CD4-positive, alpha-beta T cell (primary cell): ENCODE measurements at regions of chr10 and their contacts with region 1.

Region 1: DNA sequence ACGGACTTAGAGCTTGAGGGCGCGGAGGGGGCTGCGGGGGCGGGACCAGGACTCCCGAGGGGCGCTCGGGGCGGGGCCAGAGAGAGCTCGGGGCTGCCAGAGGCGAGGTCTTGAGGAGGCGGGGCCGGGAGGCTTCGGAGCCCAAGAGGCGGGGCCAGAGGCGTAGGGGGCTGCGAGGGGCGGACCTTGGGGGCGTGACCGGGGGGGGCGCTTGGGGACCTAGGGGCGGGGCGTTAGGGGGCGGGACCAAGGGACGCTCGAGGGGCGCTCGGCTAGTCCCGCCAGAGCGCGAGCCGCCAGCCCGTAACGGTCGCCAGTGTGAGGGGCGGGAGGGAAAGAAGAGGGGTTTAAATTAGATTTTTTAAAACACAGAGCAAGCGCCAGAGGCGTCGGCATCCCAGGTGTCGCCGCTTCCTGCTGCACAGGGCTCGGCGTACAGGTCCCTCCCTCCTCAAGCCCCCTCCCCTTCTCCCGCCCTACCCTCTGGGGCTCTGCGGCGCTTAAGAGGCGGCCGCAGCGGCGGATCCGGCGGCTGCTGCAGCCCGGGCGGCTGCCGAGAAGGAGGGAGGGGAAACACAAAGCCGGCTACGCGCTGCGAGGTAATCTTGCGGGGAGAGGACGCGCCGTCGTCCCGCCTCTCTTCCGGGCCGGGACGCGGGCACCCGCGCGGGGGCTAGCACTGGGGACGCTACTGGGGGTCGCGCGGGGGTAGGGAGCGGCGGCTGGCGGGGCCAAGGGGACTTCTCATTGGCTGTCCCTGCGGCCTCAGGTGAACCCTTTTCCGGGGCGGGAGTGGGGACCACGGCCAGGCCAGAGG is at the start of gene ADD3:
- DNase-seq: peak; percentile 83 to 97 (median 90)
- ATAC-seq: peak; percentile 72
- H3K4me3 ChIP-seq: peak within 1 kb of the TSS; percentile 63
- H3K4me3 Mint-ChIP-seq: peak within 1 kb of the TSS; percentile 99
- H3K27ac ChIP-seq: peak within 1 kb of the TSS; percentile 64 to 93
- H3K27ac Mint-ChIP-seq: no peak within 1 kb of the TSS
- H3K4me1 ChIP-seq: peaks cover 20% of the 10 kb centered on the region
- H3K4me1 Mint-ChIP-seq: peaks cover 50% of the 10 kb centered on the region
- H3K27me3 ChIP-seq: no peaks in the 10 kb centered on the region
- H3K27me3 Mint-ChIP-seq: no peaks in the 10 kb centered on the region
- CTCF ChIP-seq: no peak
- total RNA-seq, gene ADD3: 273 to 302 TPM

Region 2: DNA sequence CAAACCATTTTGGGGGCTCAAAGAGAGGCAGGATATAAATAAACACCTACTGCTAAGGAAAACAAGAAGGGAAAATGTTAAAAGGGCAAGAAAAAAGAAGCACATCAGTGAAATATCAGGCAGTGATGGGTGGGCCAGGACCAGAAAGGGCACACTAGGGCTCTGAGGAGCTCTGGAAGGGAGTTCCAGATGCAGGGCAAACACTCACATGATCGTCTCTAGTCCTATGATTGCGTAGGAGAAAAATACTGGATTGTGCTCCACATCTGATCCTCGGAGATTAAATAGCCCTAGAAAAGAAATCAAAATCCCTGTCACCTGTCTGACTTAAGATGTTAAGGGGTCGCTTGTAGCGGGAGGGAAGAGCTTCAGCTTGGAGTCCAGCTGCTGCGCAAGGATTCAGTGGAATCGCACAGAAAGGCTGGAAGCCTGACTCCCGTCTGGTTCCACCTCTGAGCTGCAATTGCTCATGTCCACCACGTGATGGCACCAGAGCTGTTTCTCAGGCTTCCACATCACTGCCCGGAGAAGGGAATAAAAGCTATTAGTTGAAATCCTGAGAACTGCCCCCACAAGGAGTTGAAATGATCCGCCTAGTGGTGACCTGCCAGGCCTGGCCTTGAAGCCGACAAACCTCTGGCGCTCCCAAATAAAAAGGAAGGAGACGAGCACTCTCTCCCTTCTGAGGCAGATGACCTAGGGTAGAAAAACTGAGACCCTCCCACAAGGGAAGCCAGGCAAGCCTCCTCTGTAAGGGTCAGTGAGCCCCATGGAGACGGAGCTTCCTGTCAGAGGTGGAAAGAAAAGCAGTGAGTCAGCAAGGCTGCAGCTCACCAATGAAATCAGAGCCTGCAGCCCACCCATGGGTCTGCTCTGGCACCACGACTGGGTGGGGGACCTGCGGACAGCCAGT is 123.8 kb before region 1 on chr10:
- CTCF ChIA-PET with region 1: interaction called, 5 read pairs
- POLR2A ChIA-PET with region 1: no interaction called
- intact Hi-C with region 1: loop called (anchors 2 kb)
- DNase-seq: peak; percentile 41 to 82 (median 52)
- ATAC-seq: peak; percentile 88
- H3K4me3 ChIP-seq: no peak overlapping the region
- H3K4me3 Mint-ChIP-seq: no peak overlapping the region
- H3K27ac ChIP-seq: no peak overlapping the region
- H3K27ac Mint-ChIP-seq: no peak overlapping the region
- H3K4me1 ChIP-seq: peaks cover 5% of the 10 kb centered on the region
- H3K4me1 Mint-ChIP-seq: peaks cover 6% of the 10 kb centered on the region
- H3K27me3 ChIP-seq: no peaks in the 10 kb centered on the region
- H3K27me3 Mint-ChIP-seq: no peaks in the 10 kb centered on the region
- CTCF ChIP-seq: peak; percentile 98

Region 3: DNA sequence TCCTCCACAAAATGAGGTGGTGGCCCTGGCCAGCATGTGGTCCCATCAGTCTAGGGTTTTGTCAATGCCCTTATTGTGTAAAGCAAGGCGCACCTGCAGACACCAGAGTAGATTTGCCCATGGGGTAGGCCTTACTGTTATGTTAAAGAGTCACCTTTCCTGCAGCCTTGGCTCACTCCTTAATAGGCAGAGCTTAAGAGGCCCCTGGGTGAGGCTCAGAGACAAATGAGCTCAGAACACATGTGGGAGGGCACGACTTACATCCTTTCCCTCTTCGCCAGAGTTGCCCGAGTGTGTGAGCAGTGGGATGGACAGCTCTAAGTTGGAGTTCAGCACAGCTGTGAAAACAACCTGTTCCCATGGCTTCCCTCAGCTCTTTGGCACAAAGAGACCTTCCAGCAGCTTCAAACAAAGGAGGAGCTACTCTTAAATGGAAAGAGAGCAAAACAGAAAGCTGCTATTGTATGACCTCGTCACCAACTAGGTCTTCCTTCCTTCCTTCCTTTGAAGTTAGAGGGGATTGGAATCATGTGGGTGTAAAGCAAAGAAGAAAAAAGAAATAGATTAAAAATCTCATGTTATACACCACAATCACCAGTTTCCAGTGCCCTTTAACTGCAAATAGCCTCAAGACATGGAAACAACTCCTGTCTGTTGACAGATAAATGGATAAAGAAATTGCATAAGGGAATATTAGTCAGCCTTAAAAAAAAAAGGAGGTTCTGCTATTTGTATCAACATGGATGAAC is 72.8 kb before region 1 on chr10:
- CTCF ChIA-PET with region 1: no interaction called
- POLR2A ChIA-PET with region 1: interaction called, 4 read pairs
- intact Hi-C with region 1: loop called in 1 of 2 experiments (anchors 2 kb)
- DNase-seq: peak in 4 of 14 experiments; percentile 26 to 73 (median 38)
- ATAC-seq: peak; percentile 54
- H3K4me3 ChIP-seq: peak overlapping the region; percentile 30
- H3K4me3 Mint-ChIP-seq: peak overlapping the region; percentile 82
- H3K27ac ChIP-seq: peak overlapping the region; percentile 21 to 68
- H3K27ac Mint-ChIP-seq: peak overlapping the region; percentile 90
- H3K4me1 ChIP-seq: peaks cover 57% of the 10 kb centered on the region
- H3K4me1 Mint-ChIP-seq: peaks cover 77% of the 10 kb centered on the region
- H3K27me3 ChIP-seq: no peaks in the 10 kb centered on the region
- H3K27me3 Mint-ChIP-seq: no peaks in the 10 kb centered on the region
- CTCF ChIP-seq: no peak

Region 4: DNA sequence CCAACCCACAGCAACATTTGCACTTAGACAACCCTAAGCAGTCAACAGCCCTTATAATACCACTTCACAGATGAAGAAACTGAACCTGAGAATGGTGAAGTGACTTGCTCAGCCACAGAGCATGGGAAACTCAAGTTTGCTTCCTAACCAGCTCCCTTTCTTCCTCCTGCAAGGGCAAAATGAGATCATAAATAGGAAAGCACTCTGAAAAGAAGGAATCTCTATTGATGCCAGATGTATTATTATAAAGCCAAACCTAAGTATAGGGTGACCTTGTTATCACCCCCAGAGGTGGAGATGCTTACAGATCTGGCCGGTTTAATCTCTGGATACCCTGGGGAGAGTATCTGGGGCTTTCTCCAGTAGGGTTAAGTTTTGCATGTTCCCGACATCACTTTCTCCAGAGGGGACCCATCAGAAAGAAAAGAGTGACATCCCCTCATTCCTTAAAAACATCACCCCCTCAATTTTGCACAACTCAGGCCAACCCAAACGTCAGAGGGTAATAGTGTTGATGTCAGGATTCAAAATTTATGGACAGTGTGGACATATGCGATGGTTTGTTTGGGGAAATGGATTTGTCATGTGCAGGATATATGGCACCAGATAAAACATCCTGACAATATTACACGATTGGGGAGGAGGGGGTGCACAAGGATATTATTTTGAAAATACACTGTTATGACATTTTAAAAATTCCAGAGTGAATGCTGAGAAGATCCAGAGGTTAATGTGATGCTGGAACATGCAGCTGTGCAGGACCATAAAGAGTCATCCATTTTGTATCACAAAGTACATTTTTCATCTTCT is 60.6 kb before region 1 on chr10:
- CTCF ChIA-PET with region 1: no interaction called
- POLR2A ChIA-PET with region 1: no interaction called
- intact Hi-C with region 1: no loop called
- DNase-seq: no peak
- ATAC-seq: no peak
- H3K4me3 ChIP-seq: no peak overlapping the region
- H3K4me3 Mint-ChIP-seq: no peak overlapping the region
- H3K27ac ChIP-seq: no peak overlapping the region
- H3K27ac Mint-ChIP-seq: no peak overlapping the region
- H3K4me1 ChIP-seq: no peaks in the 10 kb centered on the region
- H3K4me1 Mint-ChIP-seq: no peaks in the 10 kb centered on the region
- H3K27me3 ChIP-seq: no peaks in the 10 kb centered on the region
- H3K27me3 Mint-ChIP-seq: no peaks in the 10 kb centered on the region
- CTCF ChIP-seq: no peak

Region 5: GRCh38 chr10:110036640-110037039 is 28.7 kb after region 1 on chr10:
- CTCF ChIA-PET with region 1: no interaction called
- POLR2A ChIA-PET with region 1: interaction called, 6 read pairs
- intact Hi-C with region 1: loop called in 1 of 2 experiments (anchors 2 kb)
- DNase-seq: no peak
- ATAC-seq: no peak
- H3K4me3 ChIP-seq: no peak overlapping the region
- H3K4me3 Mint-ChIP-seq: peak overlapping the region; percentile 14
- H3K27ac ChIP-seq: no peak overlapping the region
- H3K27ac Mint-ChIP-seq: peak overlapping the region; percentile 56
- H3K4me1 ChIP-seq: peaks cover 45% of the 10 kb centered on the region
- H3K4me1 Mint-ChIP-seq: peaks cover 98% of the 10 kb centered on the region
- H3K27me3 ChIP-seq: no peaks in the 10 kb centered on the region
- H3K27me3 Mint-ChIP-seq: no peaks in the 10 kb centered on the region
- CTCF ChIP-seq: no peak

Region 6: GRCh38 chr10:110076559-110077318 is 68.8 kb after region 1 on chr10:
- CTCF ChIA-PET with region 1: interaction called, 9 read pairs
- POLR2A ChIA-PET with region 1: interaction called, 69 read pairs
- intact Hi-C with region 1: loop called (anchors 2 to 5 kb)
- DNase-seq: peak in 9 of 14 experiments; percentile 12 to 82 (median 29)
- ATAC-seq: peak; percentile 72
- H3K4me3 ChIP-seq: peak overlapping the region; percentile 54
- H3K4me3 Mint-ChIP-seq: peak overlapping the region; percentile 80
- H3K27ac ChIP-seq: peak overlapping the region; percentile 19 to 66
- H3K27ac Mint-ChIP-seq: peak overlapping the region; percentile 85
- H3K4me1 ChIP-seq: peaks cover 54% of the 10 kb centered on the region
- H3K4me1 Mint-ChIP-seq: peaks cover 88% of the 10 kb centered on the region
- H3K27me3 ChIP-seq: no peaks in the 10 kb centered on the region
- H3K27me3 Mint-ChIP-seq: no peaks in the 10 kb centered on the region
- CTCF ChIP-seq: no peak

Region 7: DNA sequence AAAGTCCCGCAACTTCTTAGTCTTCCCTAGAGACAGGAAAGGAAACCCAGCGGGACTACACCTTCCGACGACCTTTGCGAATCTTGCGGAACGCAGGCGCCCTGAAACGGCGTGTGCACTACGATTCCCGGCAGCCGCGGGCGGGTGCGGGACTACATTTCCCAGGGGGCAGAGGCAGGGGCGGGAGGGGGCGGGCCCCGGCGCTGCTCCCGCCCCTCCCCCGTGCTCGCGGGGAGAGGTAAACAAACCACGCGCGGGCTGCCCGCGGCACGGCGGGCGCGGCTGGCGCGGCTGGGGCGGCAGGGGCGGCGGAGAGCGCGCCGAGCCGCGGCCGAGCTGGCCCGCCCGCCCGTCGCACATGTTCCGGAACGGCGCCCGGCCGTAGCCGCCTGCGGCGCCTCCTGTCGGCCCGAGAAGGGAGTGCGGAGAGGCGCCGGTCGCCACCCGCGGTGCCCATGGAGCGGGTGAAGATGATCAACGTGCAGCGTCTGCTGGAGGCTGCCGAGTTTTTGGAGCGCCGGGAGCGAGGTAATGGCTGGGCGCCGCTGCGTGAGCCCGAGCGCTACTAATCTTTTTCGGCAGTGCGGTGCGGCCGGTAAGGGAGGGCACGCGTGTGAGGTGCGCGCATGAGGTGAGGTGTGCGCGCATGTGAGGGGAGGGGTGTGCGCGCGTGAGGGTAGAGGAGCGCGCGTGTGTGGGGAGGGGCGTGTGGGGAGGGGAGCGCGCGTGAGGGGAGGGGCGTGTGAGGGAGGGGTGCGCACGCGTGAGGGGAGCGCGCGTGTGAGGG is 218.0 kb after region 1 on chr10:
- CTCF ChIA-PET with region 1: interaction called, 3 read pairs
- POLR2A ChIA-PET with region 1: no interaction called
- intact Hi-C with region 1: loop called (anchors 5 kb)
- DNase-seq: peak; percentile 78 to 96 (median 87)
- ATAC-seq: peak; percentile 49
- H3K4me3 ChIP-seq: peak overlapping the region; percentile 81
- H3K4me3 Mint-ChIP-seq: peak overlapping the region; percentile 99
- H3K27ac ChIP-seq: peak overlapping the region; percentile 75 to 84
- H3K27ac Mint-ChIP-seq: peak overlapping the region; percentile 96
- H3K4me1 ChIP-seq: peaks cover 32% of the 10 kb centered on the region
- H3K4me1 Mint-ChIP-seq: peaks cover 38% of the 10 kb centered on the region
- H3K27me3 ChIP-seq: no peaks in the 10 kb centered on the region
- H3K27me3 Mint-ChIP-seq: no peaks in the 10 kb centered on the region
- CTCF ChIP-seq: peak; percentile 55

Region 8: GRCh38 chr10:110918643-110919363 is 910.9 kb after region 1 on chr10 and contains the start of gene BBIP1:
- CTCF ChIA-PET with region 1: no interaction called
- POLR2A ChIA-PET with region 1: interaction called, 3 read pairs
- intact Hi-C with region 1: loop called in 1 of 2 experiments (anchors 2 kb)
- DNase-seq: peak in 6 of 14 experiments; percentile 69 to 100 (median 95)
- ATAC-seq: peak; percentile 94
- H3K4me3 ChIP-seq: peak within 1 kb of the TSS; percentile 97
- H3K4me3 Mint-ChIP-seq: peak within 1 kb of the TSS; percentile 99
- H3K27ac ChIP-seq: peak within 1 kb of the TSS; percentile 98 to 100
- H3K27ac Mint-ChIP-seq: peak within 1 kb of the TSS; percentile 99
- H3K4me1 ChIP-seq: peaks cover 8% of the 10 kb centered on the region
- H3K4me1 Mint-ChIP-seq: peaks cover 62% of the 10 kb centered on the region
- H3K27me3 ChIP-seq: no peaks in the 10 kb centered on the region
- H3K27me3 Mint-ChIP-seq: no peaks in the 10 kb centered on the region
- CTCF ChIP-seq: no peak
- total RNA-seq, gene BBIP1: 17.1 to 21.9 TPM